H1 (cell line): ENCODE measurements at regions of chr3 and their contacts with region 1.

Region 1: DNA sequence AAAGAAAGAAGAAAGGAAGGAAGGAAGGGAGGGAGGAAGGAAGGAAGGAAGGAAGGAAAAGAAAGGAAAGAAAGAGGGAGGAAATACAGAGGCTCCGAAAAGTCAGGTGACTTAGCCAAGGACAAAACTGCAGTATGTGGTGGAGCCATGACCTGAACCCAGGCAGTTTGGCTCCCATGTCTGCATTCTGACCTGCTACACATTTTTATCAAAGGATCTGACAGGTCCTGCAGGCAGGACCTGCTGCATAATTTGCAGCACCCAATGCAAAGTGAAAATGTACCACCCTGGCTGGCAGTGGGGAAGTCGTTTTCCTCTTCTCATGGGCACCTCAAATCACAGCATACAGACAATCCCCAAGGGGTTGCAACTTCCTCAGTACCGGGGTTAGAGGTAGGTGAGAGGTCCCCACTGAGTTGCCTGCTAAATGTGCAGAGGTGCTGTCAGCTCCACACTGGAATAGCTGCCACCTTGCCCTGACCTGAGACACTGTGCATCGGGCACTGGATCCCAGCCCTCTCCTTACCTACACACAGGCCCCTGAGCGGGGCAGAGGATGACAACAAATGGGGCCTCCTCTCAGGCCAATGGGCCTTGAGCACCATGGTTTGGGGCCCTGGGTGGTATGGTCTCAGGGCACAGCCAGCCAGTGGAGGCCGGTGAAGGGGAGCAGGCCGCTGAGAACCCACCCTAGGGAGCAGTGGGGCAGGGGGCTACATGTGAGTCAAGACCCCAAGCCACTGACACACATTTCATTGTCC is 175.1 kb downstream of the SHQ1 start:
- DNase-seq: no peak
- H3K4me3 ChIP-seq: no peak overlapping the region
- H3K27ac ChIP-seq: no peak overlapping the region
- H3K4me1 ChIP-seq: no peaks in the 10 kb centered on the region
- H3K27me3 ChIP-seq: no peaks in the 10 kb centered on the region
- CTCF ChIP-seq: no peak
- EP300 ChIP-seq: no peak
- POLR2A ChIP-seq: no peak
- RAD21 ChIP-seq: no peak

Region 2: DNA sequence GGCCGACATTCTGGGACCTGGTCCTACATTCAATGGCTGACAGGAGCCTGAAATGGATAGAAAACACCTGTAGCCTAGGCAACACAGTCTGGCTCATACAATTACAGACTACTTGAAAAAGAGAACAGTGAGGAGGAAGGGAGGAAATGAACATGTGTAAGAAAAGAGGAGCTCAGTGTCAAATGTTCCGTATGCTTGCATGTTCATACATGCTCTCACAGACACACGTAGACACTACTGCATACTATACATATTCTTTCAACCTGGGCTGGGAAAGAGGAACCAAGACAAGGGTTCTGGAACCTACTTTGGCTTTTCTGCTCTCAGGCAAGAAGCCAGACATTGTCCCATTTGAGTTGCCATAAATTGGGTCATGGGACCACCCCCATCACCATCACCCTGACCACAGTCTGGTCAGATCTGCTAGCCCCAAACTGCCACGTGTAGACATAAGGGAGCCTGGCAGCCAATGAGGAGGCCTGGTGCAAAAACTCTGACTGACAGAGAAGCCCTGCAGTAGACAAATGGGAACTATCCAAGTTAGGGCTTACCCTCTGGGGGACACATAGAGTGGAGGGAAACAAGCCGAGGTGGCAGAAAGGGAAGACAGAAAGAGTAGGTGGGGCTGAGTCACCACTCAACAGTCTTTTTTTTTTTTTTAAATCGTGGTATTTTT is 135.0 kb before region 1 on chr3:
- CTCF ChIA-PET with region 1: no interaction called
- POLR2A ChIA-PET with region 1: no interaction called
- DNase-seq: no peak
- H3K4me3 ChIP-seq: no peak overlapping the region
- H3K27ac ChIP-seq: no peak overlapping the region
- H3K4me1 ChIP-seq: peaks cover 4 to 8% (median 7%) of the 10 kb centered on the region in 4 experiments; a peak in 6 of 7 replicates
- H3K27me3 ChIP-seq: peaks cover 0 to 5% (median 2%) of the 10 kb centered on the region in 4 experiments; a peak in 4 of 7 replicates
- CTCF ChIP-seq: no peak
- EP300 ChIP-seq: no peak
- POLR2A ChIP-seq: no peak
- RAD21 ChIP-seq: no peak

Region 3: GRCh38 chr3:72744330-72744729 is 71.1 kb after region 1 on chr3:
- CTCF ChIA-PET with region 1: interaction called, 12 read pairs
- POLR2A ChIA-PET with region 1: no interaction called
- DNase-seq: no peak
- H3K4me3 ChIP-seq: no peak overlapping the region
- H3K27ac ChIP-seq: no peak overlapping the region
- H3K4me1 ChIP-seq: peaks cover 0 to 3% (median under 1%) of the 10 kb centered on the region in 4 experiments; a peak in 4 of 7 replicates
- H3K27me3 ChIP-seq: peaks cover 0 to 9% (median 7%) of the 10 kb centered on the region in 4 experiments; a peak in 5 of 7 replicates
- CTCF ChIP-seq: no peak
- EP300 ChIP-seq: no peak
- POLR2A ChIP-seq: no peak
- RAD21 ChIP-seq: no peak